ENCODE measurements at regions of chr5 and their contacts with region 1.

Region 1: DNA sequence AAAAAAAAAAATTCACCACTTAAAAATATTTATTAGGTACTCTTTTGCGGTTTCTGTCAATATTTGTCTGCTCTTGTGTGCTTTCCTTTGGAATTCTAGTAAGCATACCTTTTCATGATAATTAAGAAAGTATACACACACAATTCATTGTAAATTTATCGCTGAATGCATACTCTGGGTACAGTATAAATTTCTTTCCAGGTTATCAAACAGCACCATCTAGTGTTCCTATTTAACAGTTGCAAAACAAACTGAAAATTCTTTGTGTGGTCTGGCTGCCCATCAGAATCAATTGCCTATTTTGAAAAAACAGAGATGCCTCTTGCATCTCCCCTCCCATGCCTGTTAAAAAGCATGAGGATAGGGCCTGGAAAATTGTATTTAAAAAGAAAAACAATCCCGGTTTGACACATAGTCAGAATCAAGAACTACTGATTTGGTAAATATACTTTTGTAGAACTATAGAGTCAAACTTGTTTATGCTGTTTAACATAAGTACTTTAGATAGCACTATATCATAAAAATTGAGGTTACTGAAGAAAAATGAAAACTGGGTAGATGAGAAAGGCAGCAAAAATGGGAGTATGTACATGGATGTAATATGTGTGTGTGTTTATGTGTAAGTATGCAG is 16.2 kb downstream of the PGGT1B start:
- DNase-seq: peak; percentile 35
- ATAC-seq: peak; percentile 79
- H3K4me3 ChIP-seq: no peak overlapping the region
- H3K27ac ChIP-seq: no peak overlapping the region
- H3K4me1 ChIP-seq: peaks cover 0 to 36% of the 10 kb centered on the region in 2 experiments; a peak in 2 of 4 replicates
- H3K27me3 ChIP-seq: no peaks in the 10 kb centered on the region
- CTCF ChIP-seq: peak; percentile 57 to 84 (median 70); a peak in 5 of 6 replicates
- POLR2A ChIP-seq: no peak
- RAD21 ChIP-seq: peak; percentile 85

Region 2: GRCh38 chr5:113678924-113679575 is 1567.4 kb before region 1 on chr5:
- CTCF ChIA-PET with region 1: no interaction called
- POLR2A ChIA-PET with region 1: no interaction called
- RAD21 ChIA-PET with region 1: no interaction called
- intact Hi-C with region 1: loop called (anchors 5 kb)
- DNase-seq: peak; percentile 50
- ATAC-seq: peak; percentile 95
- H3K4me3 ChIP-seq: no peak overlapping the region
- H3K27ac ChIP-seq: no peak overlapping the region
- H3K4me1 ChIP-seq: no peaks in the 10 kb centered on the region
- H3K27me3 ChIP-seq: no peaks in the 10 kb centered on the region
- CTCF ChIP-seq: peak; percentile 74 to 80 (median 78); a peak in 5 of 6 replicates
- POLR2A ChIP-seq: no peak
- RAD21 ChIP-seq: peak; percentile 91

Region 3: GRCh38 chr5:114101153-114101552 is 1145.3 kb before region 1 on chr5:
- CTCF ChIA-PET with region 1: no interaction called
- POLR2A ChIA-PET with region 1: no interaction called
- RAD21 ChIA-PET with region 1: no interaction called
- intact Hi-C with region 1: loop called (anchors 5 kb)
- DNase-seq: peak; percentile 26
- ATAC-seq: peak; percentile 80
- H3K4me3 ChIP-seq: no peak overlapping the region
- H3K27ac ChIP-seq: no peak overlapping the region
- H3K4me1 ChIP-seq: no peaks in the 10 kb centered on the region
- H3K27me3 ChIP-seq: 0 out of 2 replicates have a peak, but pooled peaks cover 8% of the 10 kb centered on the region
- CTCF ChIP-seq: peak; percentile 44 to 50 (median 48); a peak in 4 of 6 replicates
- POLR2A ChIP-seq: no peak
- RAD21 ChIP-seq: peak; percentile 62

Region 4: DNA sequence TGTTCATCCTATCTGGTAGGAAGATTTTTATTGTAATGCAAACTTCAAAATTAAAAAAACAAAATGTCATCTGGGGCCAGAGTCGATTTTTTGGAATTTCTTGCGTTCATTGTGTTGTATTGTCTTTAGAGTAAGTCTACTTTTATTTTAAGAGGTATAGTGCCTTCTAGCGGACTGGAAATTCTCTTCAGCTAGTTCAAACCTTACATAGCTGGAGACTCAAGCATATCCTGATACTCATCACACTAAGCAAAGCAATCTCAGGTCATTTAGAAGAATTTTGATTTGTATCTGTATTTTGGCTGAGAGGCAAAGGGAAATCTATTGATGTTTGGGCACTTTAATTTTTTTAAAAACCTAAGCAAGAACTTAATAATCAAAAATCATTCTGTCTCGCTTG is 443.1 kb before region 1 on chr5:
- CTCF ChIA-PET with region 1: no interaction called
- POLR2A ChIA-PET with region 1: no interaction called
- RAD21 ChIA-PET with region 1: no interaction called
- intact Hi-C with region 1: loop called (anchors 2 kb)
- DNase-seq: peak; percentile 8
- ATAC-seq: peak; percentile 73
- H3K4me3 ChIP-seq: no peak overlapping the region
- H3K27ac ChIP-seq: no peak overlapping the region
- H3K4me1 ChIP-seq: no peaks in the 10 kb centered on the region
- H3K27me3 ChIP-seq: 0 out of 2 replicates have a peak, but pooled peaks cover 4% of the 10 kb centered on the region
- CTCF ChIP-seq: 0 out of 6 replicates have a peak, but pooled peaks of 2 of the 3 experiments have one; percentile 11 to 13
- POLR2A ChIP-seq: no peak
- RAD21 ChIP-seq: 0 out of 2 replicates have a peak, but pooled peaks have one; percentile 23

Region 5: GRCh38 chr5:114903767-114904166 is 342.7 kb before region 1 on chr5:
- CTCF ChIA-PET with region 1: no interaction called
- POLR2A ChIA-PET with region 1: no interaction called
- RAD21 ChIA-PET with region 1: no interaction called
- intact Hi-C with region 1: loop called (anchors 10 kb)
- DNase-seq: no peak
- ATAC-seq: no peak
- H3K4me3 ChIP-seq: no peak overlapping the region
- H3K27ac ChIP-seq: no peak overlapping the region
- H3K4me1 ChIP-seq: no peaks in the 10 kb centered on the region
- H3K27me3 ChIP-seq: no peaks in the 10 kb centered on the region
- CTCF ChIP-seq: no peak
- POLR2A ChIP-seq: no peak
- RAD21 ChIP-seq: no peak

Region 6: GRCh38 chr5:115098041-115098702 is 148.3 kb before region 1 on chr5:
- CTCF ChIA-PET with region 1: interaction called, 12 read pairs
- POLR2A ChIA-PET with region 1: no interaction called
- RAD21 ChIA-PET with region 1: interaction called in 1 of 2 experiments, 3 read pairs
- intact Hi-C with region 1: loop called (anchors 1 kb)
- DNase-seq: peak; percentile 42
- ATAC-seq: peak; percentile 96
- H3K4me3 ChIP-seq: no peak overlapping the region
- H3K27ac ChIP-seq: no peak overlapping the region
- H3K4me1 ChIP-seq: peaks cover 0 to 4% of the 10 kb centered on the region in 2 experiments; a peak in 1 of 4 replicates
- H3K27me3 ChIP-seq: no peaks in the 10 kb centered on the region
- CTCF ChIP-seq: peak; percentile 62 to 91 (median 80); a peak in 5 of 6 replicates
- POLR2A ChIP-seq: no peak
- RAD21 ChIP-seq: peak; percentile 93

Region 7: GRCh38 chr5:115415143-115415491 is 168.6 kb after region 1 on chr5:
- CTCF ChIA-PET with region 1: no interaction called
- POLR2A ChIA-PET with region 1: no interaction called
- RAD21 ChIA-PET with region 1: no interaction called
- intact Hi-C with region 1: no loop called
- DNase-seq: peak; percentile 78
- ATAC-seq: peak; percentile 84
- H3K4me3 ChIP-seq: 0 out of 4 replicates have a peak overlapping the region, but pooled peaks of 1 of the 2 experiments have one; percentile 5
- H3K27ac ChIP-seq: no peak overlapping the region
- H3K4me1 ChIP-seq: peaks cover 9 to 52% of the 10 kb centered on the region in 2 experiments
- H3K27me3 ChIP-seq: no peaks in the 10 kb centered on the region
- CTCF ChIP-seq: no peak
- POLR2A ChIP-seq: no peak
- RAD21 ChIP-seq: peak; percentile 21; the same call in 1 of the 2 replicates

Measured in HCT116 (cell line).